ENCODE measurements at regions of chr19 and their contacts with region 1.

Region 1: DNA sequence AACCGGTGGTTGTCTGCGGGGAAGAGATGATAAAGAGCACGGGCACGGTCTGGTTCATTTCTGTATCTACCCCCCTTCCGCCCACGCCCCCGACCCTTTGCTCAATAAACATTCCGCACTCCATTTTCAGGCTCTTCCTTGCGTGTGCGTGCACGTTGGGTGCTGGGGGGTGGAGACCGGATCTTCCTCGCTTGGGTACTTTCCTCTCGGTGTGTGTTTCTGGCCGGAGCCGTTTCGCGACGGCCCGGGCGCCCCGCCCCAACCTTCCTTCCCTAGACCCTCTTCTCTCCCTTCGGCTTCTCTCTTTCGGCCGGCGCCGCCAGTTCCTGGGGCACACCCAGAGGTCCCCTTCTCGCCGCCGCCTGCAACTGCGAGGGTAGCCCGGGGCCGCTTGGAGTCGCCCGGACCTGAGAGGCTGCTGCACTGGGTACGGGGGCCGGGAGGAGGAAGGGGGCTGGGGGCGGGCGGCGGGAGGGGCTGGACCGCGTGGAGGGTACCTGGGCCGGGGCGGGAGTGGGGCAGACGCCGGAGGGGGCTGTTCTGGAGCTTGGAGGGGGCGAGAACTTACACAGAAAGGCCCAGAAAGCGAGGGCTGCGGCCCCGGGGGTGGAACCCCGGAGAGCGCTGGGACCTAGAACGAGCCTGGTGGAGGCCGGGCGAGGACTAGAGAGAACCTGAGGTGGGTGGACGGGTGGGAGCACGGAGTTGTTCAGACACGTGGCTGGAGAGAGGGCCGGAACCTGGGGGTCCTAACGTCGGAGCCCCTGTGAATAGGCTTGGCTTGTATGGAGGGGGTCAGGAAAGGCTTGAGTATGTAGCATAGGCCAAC is at the start of gene ZNF581:
- DNase-seq: peak; percentile 86 to 97
- ATAC-seq: peak; percentile 45 to 65
- H3K4me3 ChIP-seq: peak within 1 kb of the TSS; percentile 63
- H3K27ac ChIP-seq: peak within 1 kb of the TSS; percentile 92 to 97
- H3K4me1 ChIP-seq: peaks cover 38% of the 10 kb centered on the region
- CTCF ChIP-seq: no peak
- EP300 ChIP-seq: no peak
- POLR2A ChIP-seq: peak; percentile 45
- RAD21 ChIP-seq: no peak
- polyA plus RNA-seq, gene ZNF581: 13.9 and 17.1 TPM in 2 replicates

Region 2: DNA sequence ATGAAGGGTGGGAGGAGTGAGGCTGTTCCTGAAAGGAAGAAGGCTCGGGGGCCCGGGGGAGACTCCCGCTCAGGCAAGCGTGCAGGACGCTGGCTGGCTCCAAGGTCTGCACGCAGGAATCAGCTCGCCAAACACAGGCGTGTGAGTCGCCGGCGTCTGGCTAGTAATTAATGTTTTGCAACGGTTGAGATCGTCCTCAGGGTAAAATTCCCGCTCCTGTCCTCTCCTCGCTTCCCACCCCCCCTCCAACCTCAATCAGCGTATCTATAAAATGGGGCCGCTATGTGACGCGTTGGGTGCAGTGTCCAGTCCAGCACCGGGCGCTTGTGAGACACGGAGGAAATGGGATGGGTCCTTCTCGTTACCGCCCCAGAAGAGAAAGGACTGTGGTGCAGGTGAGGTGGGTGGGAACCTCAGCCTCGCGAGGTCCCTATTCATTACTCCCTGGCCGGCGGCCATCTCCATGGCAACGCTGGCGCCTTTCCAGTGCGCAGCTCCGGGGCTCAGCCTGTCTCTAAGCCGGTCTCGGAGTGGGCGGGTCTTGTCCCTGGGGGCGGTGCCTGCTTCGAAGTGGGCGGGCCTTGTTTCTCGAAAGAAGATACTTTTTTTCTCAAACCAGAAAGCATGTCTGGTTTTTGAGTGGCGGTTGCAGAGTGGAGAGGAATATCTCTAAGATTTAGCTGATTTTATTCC is 56.4 kb before region 1 on chr19:
- CTCF ChIA-PET with region 1: no interaction called
- POLR2A ChIA-PET with region 1: no interaction called
- DNase-seq: peak; percentile 97 to 98
- ATAC-seq: peak; percentile 86 to 88
- H3K4me3 ChIP-seq: peak overlapping the region; percentile 43
- H3K27ac ChIP-seq: peak overlapping the region; percentile 53 to 79
- H3K4me1 ChIP-seq: peaks cover 22% of the 10 kb centered on the region
- CTCF ChIP-seq: no peak
- EP300 ChIP-seq: no peak
- POLR2A ChIP-seq: no peak
- RAD21 ChIP-seq: no peak; a peak in 1 of 5 replicates

Region 3: DNA sequence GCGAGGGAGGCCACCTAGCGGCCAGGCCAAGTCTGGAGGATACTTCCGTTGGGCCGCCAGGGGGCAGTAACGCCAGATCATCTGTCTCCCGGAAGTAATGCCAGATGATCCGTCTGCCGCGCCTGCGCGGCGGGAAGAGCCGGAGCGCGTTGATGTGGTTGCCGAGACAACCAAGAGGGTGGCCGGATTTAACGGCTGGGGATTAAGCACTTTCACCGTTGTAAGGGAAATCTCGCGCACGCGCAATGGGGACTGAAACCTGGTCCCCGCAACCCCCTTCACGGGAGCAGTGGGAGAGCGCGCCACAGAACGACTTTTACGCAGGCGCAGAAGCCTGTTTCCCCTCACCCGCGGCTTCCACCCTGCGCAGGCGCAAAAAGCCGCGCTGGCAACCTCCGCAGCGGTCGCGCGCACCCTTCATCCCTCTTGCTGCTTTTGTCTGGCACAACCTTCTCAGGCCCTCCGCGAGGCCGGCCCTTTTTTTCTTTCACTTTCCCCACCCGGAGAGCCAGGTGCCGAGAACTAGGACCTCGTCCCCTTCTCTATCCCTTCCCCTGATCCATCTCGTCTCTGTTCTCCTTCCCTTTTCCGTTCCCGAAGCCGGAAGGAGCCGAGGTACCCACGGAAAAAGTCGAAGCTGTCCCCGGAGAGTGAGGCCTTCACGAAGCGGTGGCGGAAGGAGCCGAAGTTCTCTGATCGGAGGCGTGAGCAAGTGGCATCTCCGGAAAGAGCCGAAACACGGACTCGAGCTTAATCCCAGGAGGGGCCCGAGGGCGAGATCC is 10.4 kb after region 1 on chr19:
- CTCF ChIA-PET with region 1: interaction called, 53 read pairs
- POLR2A ChIA-PET with region 1: interaction called, 25 read pairs
- DNase-seq: peak; percentile 98 to 100
- ATAC-seq: peak; percentile 71 to 85
- H3K4me3 ChIP-seq: peak overlapping the region; percentile 68
- H3K27ac ChIP-seq: peak overlapping the region; percentile 96 to 98
- H3K4me1 ChIP-seq: peaks cover 34% of the 10 kb centered on the region
- CTCF ChIP-seq: peak; percentile 100
- EP300 ChIP-seq: no peak
- POLR2A ChIP-seq: peak; percentile 86
- RAD21 ChIP-seq: peak; percentile 59 to 65

Region 4: GRCh38 chr19:55882626-55883025 is 239.1 kb after region 1 on chr19:
- CTCF ChIA-PET with region 1: no interaction called
- POLR2A ChIA-PET with region 1: no interaction called
- DNase-seq: no peak
- ATAC-seq: no peak
- H3K4me3 ChIP-seq: no peak overlapping the region
- H3K27ac ChIP-seq: no peak overlapping the region
- H3K4me1 ChIP-seq: no peaks in the 10 kb centered on the region
- CTCF ChIP-seq: no peak
- EP300 ChIP-seq: no peak
- POLR2A ChIP-seq: no peak
- RAD21 ChIP-seq: no peak